A673 (cell line): ENCODE measurements at regions of chr5 and their contacts with region 1.

Region 1: GRCh38 chr5:95432779-95433178 is 41.6 kb downstream of the FAM81B start:
- DNase-seq: no peak
- H3K4me3 ChIP-seq: no peak overlapping the region
- H3K27ac ChIP-seq: no peak overlapping the region
- H3K4me1 ChIP-seq: no peaks in the 10 kb centered on the region
- H3K27me3 ChIP-seq: no peaks in the 10 kb centered on the region
- CTCF ChIP-seq: no peak

Region 2: GRCh38 chr5:95471942-95472341 is 39.2 kb after region 1 on chr5:
- CTCF ChIA-PET with region 1: no interaction called
- POLR2A ChIA-PET with region 1: no interaction called
- intact Hi-C with region 1: loop called (anchors 1 kb)
- DNase-seq: peak; percentile 9
- H3K4me3 ChIP-seq: no peak overlapping the region
- H3K27ac ChIP-seq: no peak overlapping the region
- H3K4me1 ChIP-seq: no peaks in the 10 kb centered on the region
- H3K27me3 ChIP-seq: no peaks in the 10 kb centered on the region
- CTCF ChIP-seq: no peak

Region 3: GRCh38 chr5:95738072-95738471 is 305.3 kb after region 1 on chr5:
- CTCF ChIA-PET with region 1: no interaction called
- POLR2A ChIA-PET with region 1: no interaction called
- intact Hi-C with region 1: no loop called
- DNase-seq: no peak
- H3K4me3 ChIP-seq: no peak overlapping the region
- H3K27ac ChIP-seq: no peak overlapping the region
- H3K4me1 ChIP-seq: peaks cover 3% of the 10 kb centered on the region
- H3K27me3 ChIP-seq: no peaks in the 10 kb centered on the region
- CTCF ChIP-seq: no peak